Activated CD8-positive, alpha-beta T cell treated with anti-CD3 and anti-CD28 coated beads for 36 hours (primary cell): ENCODE measurements at regions of chr1 and their contacts with region 1.

Region 1: DNA sequence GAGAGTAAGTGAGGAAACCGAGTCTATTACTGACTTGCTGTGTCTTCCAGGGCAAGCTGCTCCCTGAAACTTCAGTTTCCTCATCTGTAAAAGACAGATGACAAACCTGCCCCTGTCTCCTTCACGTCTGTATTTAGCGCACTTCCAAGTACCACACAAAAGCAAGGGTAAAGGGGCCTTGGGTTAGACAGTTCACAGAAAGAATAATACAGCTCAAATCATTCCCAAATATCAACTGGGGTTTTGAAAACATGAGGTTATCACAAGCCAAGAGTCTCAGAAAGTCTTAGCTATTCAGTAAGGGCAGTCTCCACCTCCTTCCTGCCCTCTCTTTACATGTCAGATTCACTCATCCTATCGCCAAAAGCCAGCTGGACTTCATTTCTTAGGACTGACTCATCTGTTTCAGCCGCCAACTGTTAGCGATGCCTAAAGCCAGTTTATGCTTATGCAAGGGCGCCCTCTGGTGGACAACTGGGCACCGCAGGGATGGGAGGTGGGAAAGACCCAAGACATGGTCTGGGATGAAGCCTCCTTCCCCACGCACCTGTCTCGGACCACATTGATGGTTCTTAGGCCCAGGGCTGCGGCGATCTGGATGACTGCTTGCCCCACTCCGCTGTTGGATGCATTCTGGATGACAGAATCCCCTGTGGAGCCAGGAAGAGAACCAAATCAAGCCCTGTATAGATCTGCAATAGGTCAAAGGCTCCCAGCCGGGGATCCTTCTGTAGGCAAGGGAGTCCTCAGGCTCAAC is 21.1 kb upstream of the SRSF4 start:
- DNase-seq: peak; percentile 97
- ATAC-seq: peak; percentile 97
- H3K4me3 Mint-ChIP-seq: no peak overlapping the region
- H3K27ac Mint-ChIP-seq: peak overlapping the region; percentile 21
- H3K4me1 Mint-ChIP-seq: peaks cover 15% of the 10 kb centered on the region
- H3K27me3 Mint-ChIP-seq: no peaks in the 10 kb centered on the region
- CTCF ChIP-seq: peak; percentile 93

Region 2: GRCh38 chr1:28775121-28775944 is 427.4 kb before region 1 on chr1:
- CTCF ChIA-PET with region 1: interaction called, 4 read pairs
- POLR2A ChIA-PET with region 1: no interaction called
- intact Hi-C with region 1: loop called (anchors 10 kb)
- DNase-seq: peak; percentile 71
- ATAC-seq: peak; percentile 94
- H3K4me3 Mint-ChIP-seq: peak overlapping the region; percentile 68
- H3K27ac Mint-ChIP-seq: peak overlapping the region; percentile 71
- H3K4me1 Mint-ChIP-seq: peaks cover 4% of the 10 kb centered on the region
- H3K27me3 Mint-ChIP-seq: no peaks in the 10 kb centered on the region
- CTCF ChIP-seq: no peak

Region 3: DNA sequence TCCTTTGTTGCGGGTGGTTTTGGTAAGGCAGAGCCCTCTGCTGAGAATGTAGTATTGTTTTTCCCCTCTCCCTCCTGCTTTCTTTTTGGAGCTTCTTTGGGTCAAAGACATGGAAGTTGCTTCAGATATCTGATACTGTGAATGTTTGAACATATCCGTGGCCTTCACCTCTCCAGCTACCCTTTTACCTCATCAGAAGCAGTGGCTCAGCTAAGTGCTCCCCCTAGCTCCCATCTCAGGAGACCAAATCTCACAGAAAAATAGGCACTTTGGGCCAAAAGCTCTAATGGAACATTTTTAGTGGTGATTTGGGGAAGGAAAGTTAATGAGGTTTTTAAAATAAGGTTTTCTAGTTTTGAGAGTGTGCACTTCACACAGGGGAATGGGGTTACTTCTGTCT is 85.4 kb before region 1 on chr1:
- CTCF ChIA-PET with region 1: interaction called, 14 read pairs
- POLR2A ChIA-PET with region 1: no interaction called
- intact Hi-C with region 1: no loop called
- DNase-seq: no peak
- ATAC-seq: no peak
- H3K4me3 Mint-ChIP-seq: no peak overlapping the region
- H3K27ac Mint-ChIP-seq: peak overlapping the region; percentile 29
- H3K4me1 Mint-ChIP-seq: peaks cover 10% of the 10 kb centered on the region
- H3K27me3 Mint-ChIP-seq: peaks cover 2% of the 10 kb centered on the region
- CTCF ChIP-seq: no peak

Region 4: GRCh38 chr1:29156543-29157268 is 46.1 kb before region 1 on chr1:
- CTCF ChIA-PET with region 1: interaction called, 10 read pairs
- POLR2A ChIA-PET with region 1: no interaction called
- intact Hi-C with region 1: no loop called
- DNase-seq: no peak
- ATAC-seq: no peak
- H3K4me3 Mint-ChIP-seq: no peak overlapping the region
- H3K27ac Mint-ChIP-seq: no peak overlapping the region
- H3K4me1 Mint-ChIP-seq: peaks cover 7% of the 10 kb centered on the region
- H3K27me3 Mint-ChIP-seq: no peaks in the 10 kb centered on the region
- CTCF ChIP-seq: no peak

Region 5: DNA sequence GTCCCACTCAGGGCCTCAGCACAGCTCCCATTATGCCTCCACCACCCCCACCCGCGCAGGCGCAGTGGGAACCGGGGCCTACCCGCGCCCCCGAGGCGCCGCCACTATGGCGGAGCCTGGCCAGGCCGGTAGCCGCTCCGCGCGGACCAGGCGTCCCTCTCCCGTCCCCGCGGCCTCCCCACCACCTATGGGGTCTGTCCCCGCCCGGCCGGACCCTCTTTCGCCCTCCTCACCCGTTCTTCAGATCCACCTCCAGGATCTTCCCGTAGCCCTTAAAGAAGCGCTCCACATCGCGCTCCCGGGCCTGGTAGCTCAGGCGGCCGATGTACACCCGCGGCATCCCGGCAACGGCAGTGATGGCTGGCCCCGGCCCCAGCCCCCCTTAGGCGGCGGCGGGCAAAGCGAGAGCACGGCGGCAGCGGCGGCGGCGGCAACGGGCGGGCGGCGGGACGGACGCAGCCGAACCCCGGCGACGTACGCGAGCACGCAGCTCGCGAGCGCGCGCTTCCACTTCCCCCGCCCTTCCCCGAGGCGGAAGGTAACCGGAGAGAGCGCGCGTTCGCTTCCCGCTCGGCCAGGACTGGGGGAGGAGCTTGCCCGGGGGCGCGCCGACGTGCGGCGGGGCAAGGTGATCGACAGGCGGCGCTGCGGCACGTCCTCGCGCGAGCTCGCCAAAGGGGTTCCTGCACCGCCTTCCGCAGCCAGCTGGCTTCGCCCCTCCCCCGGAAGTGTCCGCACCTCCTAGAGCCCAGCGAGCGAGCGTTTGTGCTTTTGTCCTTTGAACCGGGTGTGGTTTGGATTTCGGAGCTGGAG is 21.1 kb before region 1 on chr1 and contains the start of gene SRSF4:
- CTCF ChIA-PET with region 1: interaction called, 63 read pairs
- POLR2A ChIA-PET with region 1: interaction called, 13 read pairs
- intact Hi-C with region 1: no loop called
- DNase-seq: peak; percentile 98
- ATAC-seq: peak; percentile 95
- H3K4me3 Mint-ChIP-seq: peak within 1 kb of the TSS; percentile 83
- H3K27ac Mint-ChIP-seq: peak within 1 kb of the TSS; percentile 98
- H3K4me1 Mint-ChIP-seq: peaks cover 42% of the 10 kb centered on the region
- H3K27me3 Mint-ChIP-seq: no peaks in the 10 kb centered on the region
- CTCF ChIP-seq: peak; percentile 53
- total RNA-seq, gene SRSF4: 121 to 123 TPM

Region 6: GRCh38 chr1:29218223-29218622 is 15.5 kb after region 1 on chr1:
- CTCF ChIA-PET with region 1: interaction called, 10 read pairs
- POLR2A ChIA-PET with region 1: interaction called, 3 read pairs
- intact Hi-C with region 1: no loop called
- DNase-seq: no peak
- ATAC-seq: peak; percentile 53
- H3K4me3 Mint-ChIP-seq: no peak overlapping the region
- H3K27ac Mint-ChIP-seq: peak overlapping the region; percentile 18
- H3K4me1 Mint-ChIP-seq: peaks cover 12% of the 10 kb centered on the region
- H3K27me3 Mint-ChIP-seq: no peaks in the 10 kb centered on the region
- CTCF ChIP-seq: no peak

Region 7: GRCh38 chr1:29236935-29237668 is 34.3 kb after region 1 on chr1:
- CTCF ChIA-PET with region 1: no interaction called
- POLR2A ChIA-PET with region 1: no interaction called
- intact Hi-C with region 1: no loop called
- DNase-seq: peak; percentile 18
- ATAC-seq: no peak
- H3K4me3 Mint-ChIP-seq: peak overlapping the region; percentile 73
- H3K27ac Mint-ChIP-seq: no peak overlapping the region
- H3K4me1 Mint-ChIP-seq: peaks cover 13% of the 10 kb centered on the region
- H3K27me3 Mint-ChIP-seq: peaks cover 42% of the 10 kb centered on the region
- CTCF ChIP-seq: no peak